ENCODE measurements at regions of chr19 and their contacts with region 1.

Region 1: GRCh38 chr19:9584073-9584833 is at the start of gene ZNF121:
- DNase-seq: peak; percentile 90
- ATAC-seq: peak; percentile 85
- H3K4me3 ChIP-seq: peak within 1 kb of the TSS; percentile 88
- H3K27ac ChIP-seq: peak within 1 kb of the TSS; percentile 79
- H3K4me1 ChIP-seq: no peaks in the 10 kb centered on the region
- H3K27me3 ChIP-seq: no peaks in the 10 kb centered on the region
- CTCF ChIP-seq: no peak
- total RNA-seq, gene ZNF121: 52.6 and 65.6 TPM in 2 replicates

Region 2: DNA sequence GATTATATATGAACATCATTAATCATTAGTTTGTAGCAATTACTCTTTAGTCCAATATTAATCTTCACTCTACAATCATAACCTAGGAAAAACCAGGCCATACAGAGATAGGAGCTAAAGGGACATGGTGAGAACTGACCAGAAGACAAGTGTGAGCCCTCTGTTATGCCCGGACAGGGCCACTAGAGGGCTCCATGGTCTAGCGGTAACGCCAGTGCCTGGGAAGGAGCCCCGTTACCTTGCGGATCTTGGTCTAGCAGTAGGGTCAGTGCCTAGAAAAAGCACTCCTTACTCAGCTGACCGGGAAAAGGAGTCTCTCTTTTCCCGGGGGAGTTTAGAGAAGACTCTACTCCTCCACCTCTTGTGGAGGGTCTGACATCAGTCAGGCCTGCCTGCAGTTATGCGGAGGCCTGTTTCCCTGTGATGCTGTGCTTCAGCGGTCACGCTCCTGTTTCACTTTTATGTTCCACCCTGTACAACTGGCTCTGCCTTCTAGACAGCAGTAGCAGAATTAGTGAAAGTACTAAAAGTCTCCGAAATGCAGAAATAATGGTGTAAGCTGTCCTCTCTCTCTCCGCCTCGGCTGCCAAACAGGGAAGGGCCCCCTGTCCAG is 378.6 kb before region 1 on chr19:
- CTCF ChIA-PET with region 1: no interaction called
- POLR2A ChIA-PET with region 1: no interaction called
- intact Hi-C with region 1: loop called (anchors 1 kb)
- DNase-seq: peak; percentile 89
- ATAC-seq: peak; percentile 94
- H3K4me3 ChIP-seq: peak overlapping the region; percentile 54
- H3K27ac ChIP-seq: no peak overlapping the region
- H3K4me1 ChIP-seq: no peaks in the 10 kb centered on the region
- H3K27me3 ChIP-seq: no peaks in the 10 kb centered on the region
- CTCF ChIP-seq: peak; percentile 84

Region 3: GRCh38 chr19:9435279-9436268 is 148.7 kb before region 1 on chr19 and contains the start of gene ZNF266:
- CTCF ChIA-PET with region 1: no interaction called
- POLR2A ChIA-PET with region 1: no interaction called
- intact Hi-C with region 1: loop called (anchors 5 kb)
- DNase-seq: peak; percentile 97
- ATAC-seq: peak; percentile 90
- H3K4me3 ChIP-seq: peak within 1 kb of the TSS; percentile 85
- H3K27ac ChIP-seq: peak within 1 kb of the TSS; percentile 41
- H3K4me1 ChIP-seq: peaks cover 7% of the 10 kb centered on the region; the same call in 1 of the 2 replicates
- H3K27me3 ChIP-seq: no peaks in the 10 kb centered on the region
- CTCF ChIP-seq: peak; percentile 46
- total RNA-seq, gene ZNF266: 31.9 and 32.8 TPM in 2 replicates

Region 4: DNA sequence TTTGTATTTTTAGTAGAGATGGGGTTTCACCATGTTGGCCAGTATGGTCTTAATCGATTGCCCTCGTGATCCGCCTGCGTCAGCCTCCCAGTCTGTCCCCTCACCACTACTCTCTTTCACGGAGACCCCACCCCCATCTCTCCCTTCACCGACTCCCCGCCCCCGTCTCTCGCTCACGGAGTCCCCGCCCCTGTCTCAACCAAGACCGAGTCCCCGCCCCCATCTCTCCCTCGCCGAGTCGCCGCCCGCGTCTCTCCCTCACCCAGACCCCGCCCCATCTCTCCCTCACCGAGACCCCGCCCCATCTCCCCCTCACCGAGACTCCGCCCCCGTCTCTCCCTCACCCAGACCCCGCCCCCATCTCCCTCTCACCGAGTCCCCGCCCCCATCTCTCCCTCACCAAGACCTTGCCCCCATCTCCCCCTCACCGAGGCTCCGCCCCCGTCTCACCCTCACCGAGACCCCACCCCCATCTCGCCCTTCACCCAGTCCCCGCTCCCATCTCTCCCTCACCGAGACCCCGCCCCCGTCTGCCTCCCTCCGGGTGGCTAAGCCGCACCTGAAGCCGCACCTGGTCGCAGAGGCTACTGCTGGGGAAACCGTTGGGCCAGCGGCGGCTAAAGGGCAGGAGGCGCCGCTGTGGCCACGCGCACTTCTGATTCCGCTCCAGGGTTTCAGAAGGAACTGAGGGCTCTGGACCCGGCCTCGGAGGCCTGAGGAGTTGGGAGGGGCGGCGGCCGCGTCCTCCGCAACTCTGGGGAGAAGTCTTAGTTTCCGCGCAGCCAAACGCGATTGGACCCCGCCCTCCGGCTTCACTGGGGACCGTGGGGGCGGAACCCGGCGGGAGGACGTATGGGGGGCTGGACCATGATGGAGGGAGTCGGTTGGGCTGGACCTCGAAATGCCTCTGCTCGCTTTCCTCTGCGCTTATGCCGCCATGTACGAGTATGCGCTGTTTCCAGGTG is 201.4 kb after region 1 on chr19:
- CTCF ChIA-PET with region 1: no interaction called
- POLR2A ChIA-PET with region 1: no interaction called
- intact Hi-C with region 1: loop called (anchors 1 kb)
- DNase-seq: peak; percentile 97
- ATAC-seq: peak; percentile 76
- H3K4me3 ChIP-seq: peak overlapping the region; percentile 73
- H3K27ac ChIP-seq: peak overlapping the region; percentile 75
- H3K4me1 ChIP-seq: peaks cover 23% of the 10 kb centered on the region
- H3K27me3 ChIP-seq: no peaks in the 10 kb centered on the region
- CTCF ChIP-seq: no peak